ENCODE measurements at regions of chr11 and their contacts with region 1.

Region 1: DNA sequence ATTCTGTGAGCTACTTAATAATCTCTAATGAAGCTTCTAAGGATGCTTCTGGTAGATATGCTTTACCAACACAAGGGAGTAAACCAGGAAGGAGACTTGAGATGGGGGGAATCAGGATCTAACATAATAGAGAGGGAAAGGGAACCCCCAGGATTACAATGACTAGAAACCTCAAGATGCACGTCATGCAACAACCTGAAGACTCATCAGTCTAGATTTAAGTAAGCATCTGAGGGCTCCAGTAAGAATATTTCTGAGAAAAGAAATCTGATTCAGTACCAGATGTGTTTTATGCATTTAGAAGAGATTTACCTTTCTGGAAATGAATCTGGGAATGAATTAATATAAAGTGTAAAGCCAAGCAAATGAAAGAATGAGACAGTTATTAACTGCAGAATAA is 15.2 kb downstream of the KDM4D start:
- DNase-seq: no peak
- H3K4me3 ChIP-seq: no peak overlapping the region
- H3K27ac ChIP-seq: no peak overlapping the region
- H3K4me1 ChIP-seq: no peaks in the 10 kb centered on the region
- H3K27me3 ChIP-seq: no peaks in the 10 kb centered on the region
- CTCF ChIP-seq: no peak

Region 2: DNA sequence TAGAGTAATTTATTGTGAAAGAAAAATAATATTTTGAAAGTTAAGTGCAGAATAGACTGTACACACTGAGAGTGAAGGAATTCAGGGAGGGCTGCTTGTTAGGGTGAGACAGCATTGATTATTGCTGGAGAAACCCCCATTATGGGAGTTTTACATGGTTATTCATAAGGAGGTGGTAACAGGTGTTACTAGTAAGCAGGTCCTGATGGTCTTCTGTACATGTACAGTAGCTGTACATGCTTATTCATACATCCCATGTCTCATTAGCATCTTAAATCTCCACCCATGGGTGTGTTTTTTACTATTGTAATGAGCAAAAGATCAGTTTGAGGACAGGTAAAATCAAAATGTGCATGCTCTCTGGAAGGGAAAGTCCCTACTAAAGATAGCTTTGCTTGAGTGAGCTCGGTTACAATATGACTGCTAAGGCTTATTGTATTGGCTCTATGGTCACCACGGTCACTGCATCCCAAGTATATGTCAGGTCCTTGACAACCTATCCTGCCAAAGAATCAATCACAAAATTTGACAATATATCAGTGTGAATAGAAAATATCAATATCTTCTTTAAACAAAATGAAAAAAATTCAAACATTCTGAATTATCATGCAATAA is 66.6 kb after region 1 on chr11:
- intact Hi-C with region 1: loop called (anchors 10 kb)
- DNase-seq: no peak
- H3K4me3 ChIP-seq: no peak overlapping the region
- H3K27ac ChIP-seq: no peak overlapping the region
- H3K4me1 ChIP-seq: no peaks in the 10 kb centered on the region
- H3K27me3 ChIP-seq: peaks cover 0 to 14% of the 10 kb centered on the region in 2 donors
- CTCF ChIP-seq: no peak